ENCODE measurements at regions of chr2 and their contacts with region 1.

Region 1: DNA sequence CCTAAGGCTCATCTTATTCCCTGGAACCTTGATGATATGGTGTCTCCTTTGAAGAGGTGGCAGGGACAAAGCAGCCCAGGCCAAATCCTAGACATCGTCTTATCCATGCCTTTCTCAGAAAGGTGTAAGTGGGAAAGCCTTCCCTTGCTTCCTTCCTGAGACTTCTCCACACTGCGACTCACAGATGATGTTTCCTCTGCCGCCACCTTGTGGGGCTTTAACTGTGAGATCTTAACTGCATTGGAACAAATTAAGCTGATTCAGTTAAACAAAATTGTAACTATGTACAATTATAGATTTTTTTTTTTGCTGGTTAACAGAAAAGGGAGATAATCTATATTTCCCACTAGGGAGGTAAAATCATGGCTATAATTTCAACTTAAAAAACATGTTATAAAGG is 10.0 kb upstream of the GCA start:
- DNase-seq: peak; percentile 51
- H3K4me3 ChIP-seq: no peak overlapping the region
- H3K4me3 Mint-ChIP-seq: no peak overlapping the region
- H3K27ac Mint-ChIP-seq: no peak overlapping the region
- H3K4me1 ChIP-seq: no peaks in the 10 kb centered on the region
- H3K4me1 Mint-ChIP-seq: no peaks in the 10 kb centered on the region
- H3K27me3 ChIP-seq: no peaks in the 10 kb centered on the region
- H3K27me3 Mint-ChIP-seq: peaks cover 3% of the 10 kb centered on the region
- CTCF ChIP-seq: peak; percentile 62 to 69

Region 2: DNA sequence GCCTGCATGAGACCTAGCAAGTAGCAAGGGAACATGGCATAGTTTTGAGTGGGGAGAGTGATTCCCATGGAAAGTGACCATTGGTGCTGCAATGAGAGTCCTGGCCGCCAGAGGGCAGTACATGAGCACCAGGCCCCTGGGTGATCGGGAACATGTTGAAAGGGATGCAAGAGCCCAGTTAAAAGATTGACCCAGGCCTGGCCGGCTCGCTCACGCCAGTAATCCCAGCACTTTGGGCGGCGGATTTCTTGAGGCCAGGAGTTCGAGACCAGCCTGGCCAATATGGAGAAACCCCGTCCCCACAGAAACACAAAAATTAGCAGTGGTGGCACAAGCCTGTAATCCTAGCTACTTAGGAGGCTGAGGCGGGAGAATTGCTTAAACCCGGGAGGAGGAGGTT is 112.9 kb before region 1 on chr2:
- CTCF ChIA-PET with region 1: no interaction called
- POLR2A ChIA-PET with region 1: no interaction called
- intact Hi-C with region 1: loop called (anchors 1 kb)
- DNase-seq: peak; percentile 61 to 81
- H3K4me3 ChIP-seq: no peak overlapping the region
- H3K4me3 Mint-ChIP-seq: no peak overlapping the region
- H3K27ac Mint-ChIP-seq: no peak overlapping the region
- H3K4me1 ChIP-seq: no peaks in the 10 kb centered on the region
- H3K4me1 Mint-ChIP-seq: no peaks in the 10 kb centered on the region
- H3K27me3 ChIP-seq: no peaks in the 10 kb centered on the region
- H3K27me3 Mint-ChIP-seq: peaks cover 15% of the 10 kb centered on the region
- CTCF ChIP-seq: peak; percentile 91 to 95

Region 3: GRCh38 chr2:162318328-162319180 is 15.4 kb before region 1 on chr2 and contains the start of gene IFIH1:
- CTCF ChIA-PET with region 1: interaction called, 3 read pairs
- POLR2A ChIA-PET with region 1: interaction called, 3 read pairs
- intact Hi-C with region 1: loop called (anchors 2 kb)
- DNase-seq: peak; percentile 82 to 84
- H3K4me3 ChIP-seq: peak within 1 kb of the TSS; percentile 56
- H3K4me3 Mint-ChIP-seq: peak within 1 kb of the TSS; percentile 92
- H3K27ac Mint-ChIP-seq: peak within 1 kb of the TSS; percentile 92
- H3K4me1 ChIP-seq: no peaks in the 10 kb centered on the region
- H3K4me1 Mint-ChIP-seq: no peaks in the 10 kb centered on the region
- H3K27me3 ChIP-seq: no peaks in the 10 kb centered on the region
- H3K27me3 Mint-ChIP-seq: no peaks in the 10 kb centered on the region
- CTCF ChIP-seq: peak; percentile 41 to 58
- total RNA-seq, gene IFIH1: 2.7 and 3.4 TPM in 2 replicates

Measured in Caco-2 (cell line).